ENCODE measurements at regions of chr5 and their contacts with region 1.

Region 1: GRCh38 chr5:75336625-75337339 is at the start of gene HMGCR:
- DNase-seq: peak; percentile 96
- H3K4me3 Mint-ChIP-seq: no peak within 1 kb of the TSS
- H3K27ac Mint-ChIP-seq: no peak within 1 kb of the TSS
- H3K4me1 Mint-ChIP-seq: peaks cover 40% of the 10 kb centered on the region
- H3K27me3 Mint-ChIP-seq: no peaks in the 10 kb centered on the region
- total RNA-seq, gene HMGCR: 95.7 and 113 TPM in 2 replicates

Region 2: DNA sequence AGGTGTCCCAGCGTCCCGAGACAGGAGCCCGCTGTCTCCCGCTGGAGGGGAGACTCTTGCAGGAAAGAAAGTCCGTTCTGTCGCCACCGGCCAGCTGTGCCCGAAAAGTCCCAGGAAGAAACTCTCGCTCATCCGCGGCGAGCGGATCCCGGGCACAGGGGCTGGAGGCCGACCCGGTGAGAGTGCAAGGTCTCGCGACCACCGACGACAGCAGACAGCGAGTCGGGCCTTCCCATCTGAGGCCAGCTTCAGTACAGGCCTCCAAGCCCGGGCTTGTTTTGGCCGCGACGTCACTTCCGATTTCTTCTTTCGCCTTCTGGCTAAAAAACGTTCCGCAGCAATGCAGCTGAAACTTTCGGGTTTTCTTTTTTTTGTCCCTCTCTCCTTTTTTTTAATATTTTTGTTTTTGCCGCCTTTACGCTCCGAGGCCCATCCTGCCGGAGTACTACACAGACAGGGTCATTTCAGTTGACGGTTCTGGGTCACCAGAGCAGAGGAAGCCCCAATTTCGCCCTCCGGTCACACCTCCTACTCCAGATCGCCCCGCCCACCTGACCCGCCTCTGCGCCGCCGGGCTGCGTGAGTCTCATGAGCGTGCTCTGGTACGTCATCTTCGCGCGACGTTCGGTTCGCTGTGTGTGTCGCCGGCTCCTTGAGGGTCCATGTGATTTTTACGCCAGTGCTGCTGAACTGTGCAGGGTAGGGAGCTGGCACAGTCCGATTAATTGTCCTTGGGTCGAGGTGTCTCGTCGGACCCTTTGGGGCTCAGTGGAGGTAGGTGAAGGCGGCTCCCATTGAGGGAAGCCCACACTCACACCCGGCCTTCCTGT is 1771.4 kb before region 1 on chr5 and contains the starts of genes ANKRA2 and UTP15:
- intact Hi-C with region 1: loop called (anchors 5 kb)
- DNase-seq: peak; percentile 98
- H3K4me3 Mint-ChIP-seq: peak within 1 kb of the TSS; percentile 95
- H3K27ac Mint-ChIP-seq: peak within 1 kb of the TSS; percentile 99
- H3K4me1 Mint-ChIP-seq: peaks cover 32% of the 10 kb centered on the region
- H3K27me3 Mint-ChIP-seq: no peaks in the 10 kb centered on the region
- total RNA-seq, gene ANKRA2: 15.8 and 18.8 TPM in 2 replicates
- total RNA-seq, gene UTP15: 61.0 and 64.1 TPM in 2 replicates

Region 3: GRCh38 chr5:74934949-74935751 is 401.6 kb before region 1 on chr5:
- intact Hi-C with region 1: loop called (anchors 2 kb)
- DNase-seq: peak; percentile 29
- H3K4me3 Mint-ChIP-seq: peak overlapping the region; percentile 50
- H3K27ac Mint-ChIP-seq: peak overlapping the region; percentile 42
- H3K4me1 Mint-ChIP-seq: peaks cover 38% of the 10 kb centered on the region
- H3K27me3 Mint-ChIP-seq: peaks cover 2% of the 10 kb centered on the region

Region 4: GRCh38 chr5:75351139-75351926 is 14.6 kb after region 1 on chr5:
- intact Hi-C with region 1: loop called (anchors 1 kb)
- DNase-seq: no peak
- H3K4me3 Mint-ChIP-seq: no peak overlapping the region
- H3K27ac Mint-ChIP-seq: peak overlapping the region; percentile 72
- H3K4me1 Mint-ChIP-seq: peaks cover 32% of the 10 kb centered on the region
- H3K27me3 Mint-ChIP-seq: no peaks in the 10 kb centered on the region

Region 5: GRCh38 chr5:75566710-75567309 is 230.0 kb after region 1 on chr5:
- intact Hi-C with region 1: loop called (anchors 1 kb)
- DNase-seq: peak; percentile 39
- H3K4me3 Mint-ChIP-seq: peak overlapping the region; percentile 29
- H3K27ac Mint-ChIP-seq: peak overlapping the region; percentile 81
- H3K4me1 Mint-ChIP-seq: peaks cover 53% of the 10 kb centered on the region
- H3K27me3 Mint-ChIP-seq: no peaks in the 10 kb centered on the region

Region 6: DNA sequence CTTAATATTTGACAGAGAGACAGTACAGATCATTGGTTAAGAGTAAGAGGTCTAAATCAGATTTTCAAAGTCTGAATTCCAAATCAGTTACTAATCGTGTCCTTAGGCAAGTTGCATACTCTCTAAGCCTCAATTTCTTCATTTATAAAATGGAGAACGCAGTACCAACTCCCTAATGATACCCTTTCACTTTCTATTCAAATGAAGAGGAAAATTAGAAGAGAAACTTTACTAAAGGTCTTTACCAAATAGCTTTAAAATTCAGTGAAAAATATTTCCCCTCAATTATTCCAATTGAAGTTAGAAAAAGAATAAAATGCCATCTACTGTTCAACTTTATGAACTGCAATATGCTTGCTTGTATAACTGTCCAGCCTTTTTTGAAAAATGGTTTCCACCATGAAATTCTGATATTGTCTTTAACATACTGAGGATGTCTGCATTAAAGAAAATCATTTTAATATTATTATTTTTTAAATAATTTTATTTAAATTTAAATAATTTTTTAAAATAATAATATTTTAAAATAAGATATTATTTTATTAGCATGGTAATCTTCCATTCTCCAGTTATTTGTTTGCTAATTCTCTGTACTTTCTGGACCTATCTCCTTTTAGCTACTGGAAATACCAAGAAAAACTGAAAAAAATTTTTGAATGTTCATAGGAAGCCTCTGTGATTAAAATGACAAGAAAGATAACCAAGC is 344.5 kb after region 1 on chr5:
- intact Hi-C with region 1: loop called (anchors 2 kb)
- DNase-seq: no peak
- H3K4me3 Mint-ChIP-seq: no peak overlapping the region
- H3K27ac Mint-ChIP-seq: no peak overlapping the region
- H3K4me1 Mint-ChIP-seq: peaks cover 11% of the 10 kb centered on the region
- H3K27me3 Mint-ChIP-seq: no peaks in the 10 kb centered on the region

Region 7: DNA sequence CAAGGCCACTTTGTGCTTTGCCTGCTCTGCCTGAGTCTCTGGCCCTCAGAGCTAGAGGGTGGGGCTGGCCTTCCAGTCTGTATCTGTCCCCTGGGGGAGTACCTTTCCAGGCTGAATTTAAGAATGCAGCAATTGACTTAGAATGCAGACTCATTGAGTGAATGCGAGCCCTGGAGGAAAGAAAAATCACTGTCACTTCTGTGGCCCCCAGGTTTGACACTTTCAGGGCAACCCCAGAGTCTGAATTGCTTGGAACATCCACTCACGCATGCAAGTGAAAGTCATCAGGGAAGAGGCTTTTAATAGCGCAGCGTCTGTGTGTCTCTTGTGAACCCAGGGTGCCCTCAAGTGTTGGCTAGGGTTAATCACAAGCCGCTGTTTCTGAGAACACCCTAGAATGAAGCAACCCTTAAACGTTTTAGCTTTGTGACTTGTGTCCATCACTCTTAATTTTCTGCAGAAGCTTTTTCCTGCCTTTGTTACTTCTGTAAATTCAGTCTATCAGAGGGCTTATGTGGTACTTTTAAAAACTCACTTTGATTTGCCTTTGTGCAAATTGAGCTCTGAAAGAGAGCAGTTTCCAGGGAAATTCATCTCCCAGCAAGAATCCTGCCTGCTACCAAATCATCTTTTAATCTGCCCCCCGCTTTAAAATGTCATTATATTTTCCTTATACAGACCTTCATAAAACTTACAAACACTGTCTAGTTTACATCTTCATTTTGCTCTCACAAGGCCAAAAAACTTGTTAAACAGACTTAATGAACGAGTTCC is 919.5 kb after region 1 on chr5:
- intact Hi-C with region 1: loop called (anchors 5 kb)
- DNase-seq: peak; percentile 55
- H3K4me3 Mint-ChIP-seq: no peak overlapping the region
- H3K27ac Mint-ChIP-seq: no peak overlapping the region
- H3K4me1 Mint-ChIP-seq: no peaks in the 10 kb centered on the region
- H3K27me3 Mint-ChIP-seq: peaks cover 22% of the 10 kb centered on the region

Region 8: DNA sequence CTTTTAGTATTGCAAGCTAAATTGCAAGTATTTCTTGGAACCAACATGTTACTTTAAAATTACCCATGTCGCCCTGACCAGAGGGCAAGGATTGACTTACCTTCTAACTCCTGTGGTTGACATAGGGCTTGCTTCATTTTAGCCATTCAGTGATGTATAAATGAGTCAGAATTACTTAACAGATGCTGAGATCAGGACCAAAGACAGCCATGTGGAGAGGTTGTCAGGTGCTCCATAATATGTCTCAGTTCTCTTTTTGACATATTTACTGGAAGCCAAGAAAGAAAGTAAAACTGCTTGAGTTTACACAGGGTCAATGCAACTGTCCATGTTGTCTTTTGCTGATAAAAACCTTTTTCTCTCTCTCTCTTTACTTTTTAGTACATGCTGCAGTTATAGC is 1253.2 kb after region 1 on chr5:
- intact Hi-C with region 1: no loop called
- DNase-seq: no peak
- H3K4me3 Mint-ChIP-seq: no peak overlapping the region
- H3K27ac Mint-ChIP-seq: no peak overlapping the region
- H3K4me1 Mint-ChIP-seq: peaks cover 9% of the 10 kb centered on the region
- H3K27me3 Mint-ChIP-seq: no peaks in the 10 kb centered on the region